Body of pancreas (tissue), 4 donors: ENCODE measurements at regions of chr1 and their contacts with region 1.

Region 1: GRCh38 chr1:2314803-2315673 is 76.3 kb downstream of the MORN1 start:
- DNase-seq: peak in 2 of 4 donors; percentile 41 to 53
- ATAC-seq: peak; percentile 31
- H3K4me3 ChIP-seq: peak overlapping the region; percentile 41 to 45
- H3K27ac ChIP-seq: peak overlapping the region; percentile 62 to 77 (median 65)
- H3K4me1 ChIP-seq: peaks cover 27% of the 10 kb centered on the region
- H3K27me3 ChIP-seq: no peaks in the 10 kb centered on the region
- CTCF ChIP-seq: peak; percentile 56 to 100 (median 69)
- POLR2A ChIP-seq: no peak

Region 2: GRCh38 chr1:2204516-2205190 is 110.4 kb before region 1 on chr1:
- intact Hi-C with region 1: loop called (anchors 5 kb)
- DNase-seq: peak in 3 of 4 donors; percentile 60 to 61 (median 61)
- ATAC-seq: peak; percentile 40
- H3K4me3 ChIP-seq: no peak overlapping the region
- H3K27ac ChIP-seq: peak overlapping the region; percentile 34 to 78 (median 58)
- H3K4me1 ChIP-seq: peaks cover 53% of the 10 kb centered on the region
- H3K27me3 ChIP-seq: no peaks in the 10 kb centered on the region
- CTCF ChIP-seq: no peak
- POLR2A ChIP-seq: peak in 2 of 3 donors; percentile 31 to 42

Region 3: DNA sequence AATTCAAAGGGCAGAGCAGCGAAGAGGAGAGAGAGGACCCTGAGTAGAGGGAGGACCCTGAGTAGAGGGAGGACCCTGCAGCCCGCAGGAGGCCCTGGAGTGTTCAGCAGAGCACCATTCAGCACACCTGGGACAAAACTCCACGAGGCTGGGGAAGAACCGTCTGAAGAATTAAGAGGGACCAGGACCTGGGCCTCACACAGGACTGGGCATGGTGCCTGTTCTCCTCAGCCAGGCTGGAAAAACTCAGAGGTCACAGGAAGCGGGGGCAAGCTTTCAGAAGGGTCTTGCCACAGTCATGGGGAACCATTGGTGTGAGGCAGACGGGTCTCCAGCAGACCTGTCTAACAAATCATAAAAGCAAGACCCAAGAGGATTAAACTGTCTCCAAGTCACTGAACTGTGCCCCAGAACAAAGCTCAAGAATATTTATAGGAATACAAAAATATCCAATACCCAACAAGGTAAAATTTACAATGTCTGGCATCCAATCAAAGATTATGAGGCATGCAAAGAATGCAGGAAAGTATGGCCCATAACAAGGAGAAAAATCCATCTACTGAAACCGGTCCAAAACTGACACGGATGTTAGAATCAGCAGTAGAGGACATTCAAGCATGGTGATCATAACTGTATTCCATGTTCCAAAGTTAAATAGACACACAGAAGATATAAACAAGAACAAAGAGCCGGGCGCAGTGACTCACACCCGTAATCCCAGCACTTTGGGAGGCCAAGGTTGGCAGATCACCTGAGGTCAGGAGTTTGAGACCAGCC is 45.7 kb after region 1 on chr1:
- intact Hi-C with region 1: no loop called
- DNase-seq: no peak
- ATAC-seq: peak; percentile 53
- H3K4me3 ChIP-seq: no peak overlapping the region
- H3K27ac ChIP-seq: peak overlapping the region in 2 of 4 donors; percentile 23 to 41
- H3K4me1 ChIP-seq: no peaks in the 10 kb centered on the region
- H3K27me3 ChIP-seq: no peaks in the 10 kb centered on the region
- CTCF ChIP-seq: no peak
- POLR2A ChIP-seq: no peak

Region 4: GRCh38 chr1:2556277-2556677 is 241.2 kb after region 1 on chr1 and contains the start of gene TNFRSF14:
- intact Hi-C with region 1: no loop called
- DNase-seq: peak; percentile 47 to 61 (median 50)
- ATAC-seq: peak; percentile 51
- H3K4me3 ChIP-seq: peak within 1 kb of the TSS; percentile 22 to 38
- H3K27ac ChIP-seq: peak within 1 kb of the TSS; percentile 4 to 85 (median 82)
- H3K4me1 ChIP-seq: peaks cover 31% of the 10 kb centered on the region
- H3K27me3 ChIP-seq: no peaks in the 10 kb centered on the region
- CTCF ChIP-seq: peak in 1 of 7 experiments; percentile 23
- POLR2A ChIP-seq: peak; percentile 10 to 56 (median 46)
- total RNA-seq, gene TNFRSF14: 25.9 to 58.3 TPM